ENCODE measurements at regions of chr3 and their contacts with region 1.

Region 1: DNA sequence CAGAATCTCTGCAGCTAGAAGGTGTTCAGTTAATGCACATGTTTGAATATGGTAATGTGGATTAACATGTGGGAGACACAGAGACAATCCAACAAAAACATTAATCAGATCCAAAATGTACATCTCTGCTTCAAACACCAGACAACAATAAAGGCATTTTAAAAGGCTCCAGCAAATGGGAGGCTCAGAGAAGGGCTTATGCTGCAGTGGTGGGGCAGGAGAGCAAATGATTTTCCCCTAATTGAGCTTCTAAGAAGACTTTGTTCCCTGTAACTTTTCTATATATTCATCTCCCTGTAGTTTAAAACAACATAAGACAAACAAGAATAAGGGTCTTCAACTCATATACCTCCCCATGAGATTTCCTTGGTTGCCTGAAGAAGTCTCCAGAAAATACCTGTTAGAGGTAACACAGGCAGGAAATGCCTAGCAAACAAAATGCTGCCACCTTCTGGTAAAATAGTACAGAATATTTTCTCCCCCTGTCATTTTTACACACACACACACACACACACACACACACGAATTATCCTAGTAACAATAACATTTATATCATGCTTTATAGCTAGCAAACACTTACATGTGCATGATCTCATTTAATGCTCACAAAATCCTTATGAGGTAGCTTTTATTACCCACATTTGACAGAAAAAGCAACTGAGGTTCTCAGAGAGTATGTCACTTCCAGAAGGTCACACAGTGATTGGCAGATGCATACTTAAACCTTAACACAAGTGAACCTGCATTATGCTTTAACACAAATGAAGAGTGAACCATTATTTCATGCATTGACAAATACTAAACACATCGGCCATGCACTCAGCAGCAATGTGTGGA is 123.4 kb upstream of the MB21D2 start:
- ATAC-seq: peak in 3 of 8 experiments; percentile 55 to 65 (median 61)
- H3K4me3 ChIP-seq: no peak overlapping the region
- H3K27ac ChIP-seq: no peak overlapping the region
- H3K4me1 ChIP-seq: peaks cover 2 to 4% of the 10 kb centered on the region in 2 donors

Region 2: GRCh38 chr3:192802957-192803899 is 237.8 kb before region 1 on chr3:
- in situ Hi-C with region 1: loop called in 2 of 9 experiments (anchors 25 kb)
- ATAC-seq: peak in 5 of 8 experiments; percentile 47 to 86 (median 79)
- H3K4me3 ChIP-seq: no peak overlapping the region
- H3K27ac ChIP-seq: no peak overlapping the region
- H3K4me1 ChIP-seq: peaks cover 0 to 4% of the 10 kb centered on the region in 2 donors

Region 3: DNA sequence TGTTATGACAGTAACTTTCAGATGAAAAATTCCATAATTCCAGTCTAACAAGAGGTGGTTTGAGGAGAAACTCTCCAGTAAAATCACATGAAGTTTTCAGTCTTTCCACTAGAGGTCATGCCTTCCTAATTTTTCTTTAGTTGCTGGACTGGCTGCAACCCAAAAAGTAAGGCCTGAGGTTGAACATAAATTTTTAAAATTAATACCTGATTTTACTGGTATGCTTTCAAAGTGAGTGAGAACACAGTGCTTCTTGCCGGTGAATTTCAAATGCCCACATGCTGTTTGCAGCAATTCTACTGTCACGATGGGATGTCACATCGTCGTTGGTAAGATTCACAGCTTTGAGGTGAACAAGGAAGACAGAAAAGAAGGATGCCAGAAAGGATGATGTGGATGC is 224.7 kb before region 1 on chr3:
- in situ Hi-C with region 1: loop called in 6 of 9 experiments (anchors 10 to 25 kb)
- ATAC-seq: peak in 3 of 8 experiments; percentile 29 to 61 (median 31)
- H3K4me3 ChIP-seq: no peak overlapping the region
- H3K27ac ChIP-seq: no peak overlapping the region
- H3K4me1 ChIP-seq: peaks cover 33 to 47% of the 10 kb centered on the region in 2 donors

Region 4: GRCh38 chr3:192825657-192826200 is 215.3 kb before region 1 on chr3:
- in situ Hi-C with region 1: loop called in 3 of 9 experiments (anchors 10 to 25 kb)
- ATAC-seq: peak; percentile 23 to 85 (median 62)
- H3K4me3 ChIP-seq: no peak overlapping the region
- H3K27ac ChIP-seq: no peak overlapping the region
- H3K4me1 ChIP-seq: peaks cover 13 to 14% of the 10 kb centered on the region in 2 donors

Measured in motor neuron (in vitro differentiated cells).